ENCODE measurements at regions of chr15 and their contacts with region 1.

Region 1: GRCh38 chr15:28021281-28022039 is 77.7 kb downstream of the OCA2 start:
- DNase-seq: peak; percentile 38 to 75
- ATAC-seq: peak; percentile 42 to 82; a peak in 4 of 6 replicates
- H3K4me3 ChIP-seq: no peak overlapping the region
- H3K27ac ChIP-seq: no peak overlapping the region
- H3K4me1 ChIP-seq: peaks cover 5% of the 10 kb centered on the region; the same call in 1 of the 3 replicates
- CTCF ChIP-seq: peak; percentile 58
- EP300 ChIP-seq: no peak
- POLR2A ChIP-seq: no peak
- RAD21 ChIP-seq: peak; percentile 41; a peak in 3 of 5 replicates

Region 2: DNA sequence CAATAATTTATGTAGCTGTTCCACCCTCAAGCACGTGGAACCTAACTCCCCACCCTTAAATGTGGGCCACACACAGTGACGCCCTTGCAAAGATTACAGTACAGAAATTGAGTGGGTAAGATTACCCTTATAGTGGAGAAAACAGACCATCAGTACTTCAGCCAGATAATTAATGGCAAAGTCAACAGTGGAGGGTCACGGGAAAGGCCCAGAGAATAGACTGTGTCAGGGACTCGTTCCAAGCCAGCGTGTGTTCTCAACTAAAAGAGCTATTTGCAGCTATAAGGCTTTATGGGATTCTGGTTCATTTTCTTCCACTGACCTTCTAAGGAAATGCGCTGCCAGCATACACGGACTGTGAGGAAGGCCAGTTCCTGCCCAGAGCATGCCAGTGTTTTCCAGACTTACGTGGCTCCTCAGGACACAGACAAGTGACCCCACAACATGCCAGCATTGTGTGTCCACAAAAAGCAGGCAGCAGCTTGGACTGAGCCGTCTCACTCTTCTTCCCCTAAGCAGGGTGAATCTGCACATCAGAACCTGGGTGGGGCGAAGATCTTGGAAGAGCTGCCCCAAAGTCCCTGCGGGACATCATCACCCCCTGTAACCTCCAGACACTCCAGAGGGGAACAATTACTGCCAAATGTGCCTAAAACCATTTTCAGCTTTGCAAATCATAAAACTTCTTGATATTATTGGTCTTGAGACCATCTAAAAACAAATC is 350.8 kb before region 1 on chr15:
- CTCF ChIA-PET with region 1: no interaction called
- POLR2A ChIA-PET with region 1: no interaction called
- DNase-seq: no peak
- ATAC-seq: no peak
- H3K4me3 ChIP-seq: no peak overlapping the region
- H3K27ac ChIP-seq: no peak overlapping the region
- H3K4me1 ChIP-seq: no peaks in the 10 kb centered on the region
- CTCF ChIP-seq: no peak
- EP300 ChIP-seq: no peak
- POLR2A ChIP-seq: no peak
- RAD21 ChIP-seq: no peak

Region 3: GRCh38 chr15:27977696-27978095 is 43.8 kb before region 1 on chr15:
- CTCF ChIA-PET with region 1: no interaction called
- POLR2A ChIA-PET with region 1: no interaction called
- DNase-seq: no peak
- ATAC-seq: no peak
- H3K4me3 ChIP-seq: no peak overlapping the region
- H3K27ac ChIP-seq: no peak overlapping the region
- H3K4me1 ChIP-seq: no peaks in the 10 kb centered on the region
- CTCF ChIP-seq: no peak
- EP300 ChIP-seq: no peak
- POLR2A ChIP-seq: no peak
- RAD21 ChIP-seq: no peak

Region 4: DNA sequence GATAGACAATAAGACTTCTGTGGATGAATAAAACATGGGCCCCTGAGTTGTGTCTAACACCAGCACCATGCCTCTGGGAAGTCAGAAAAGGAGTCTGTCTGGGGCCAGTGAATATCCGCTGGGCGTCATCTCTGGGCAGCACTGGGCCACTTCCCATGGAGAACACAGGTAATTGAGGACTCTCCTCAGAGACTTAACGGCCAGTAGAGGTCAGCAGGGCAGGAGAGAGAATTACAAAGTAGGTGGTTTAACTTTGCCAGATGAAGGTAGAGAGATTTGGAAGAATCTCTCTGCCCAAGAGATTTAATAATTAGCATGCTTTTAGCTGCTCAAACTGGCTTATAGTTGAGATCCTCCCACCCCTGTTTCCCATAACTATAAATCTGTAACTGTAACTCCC is 12.0 kb after region 1 on chr15:
- CTCF ChIA-PET with region 1: interaction called, 41 read pairs
- POLR2A ChIA-PET with region 1: no interaction called
- DNase-seq: no peak
- ATAC-seq: 0 out of 6 replicates have a peak, but pooled peaks of 1 of the 2 experiments have one; percentile 40
- H3K4me3 ChIP-seq: no peak overlapping the region
- H3K27ac ChIP-seq: no peak overlapping the region
- H3K4me1 ChIP-seq: no peaks in the 10 kb centered on the region
- CTCF ChIP-seq: no peak
- EP300 ChIP-seq: no peak
- POLR2A ChIP-seq: no peak
- RAD21 ChIP-seq: no peak

Region 5: DNA sequence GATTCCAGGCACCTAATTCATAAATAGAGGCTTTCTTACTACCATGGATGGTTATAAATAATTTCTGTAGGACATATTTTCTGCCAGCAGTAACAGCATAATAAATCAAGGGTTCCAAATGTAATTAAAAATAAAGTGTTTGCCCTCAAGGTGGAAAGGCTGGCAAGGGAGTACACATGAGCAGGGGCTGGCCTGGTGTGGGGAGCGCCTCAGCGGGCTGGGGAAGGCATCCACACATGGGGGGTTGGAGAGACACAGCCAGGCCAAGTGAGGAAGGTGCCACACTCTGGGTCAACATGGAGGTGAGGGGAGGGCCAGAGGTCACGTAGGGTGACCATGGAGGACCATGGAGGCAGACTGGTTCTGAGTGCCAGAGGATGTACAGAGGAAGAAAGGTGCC is 143.4 kb after region 1 on chr15:
- CTCF ChIA-PET with region 1: no interaction called
- POLR2A ChIA-PET with region 1: no interaction called
- DNase-seq: no peak
- ATAC-seq: no peak
- H3K4me3 ChIP-seq: no peak overlapping the region
- H3K27ac ChIP-seq: no peak overlapping the region
- H3K4me1 ChIP-seq: no peaks in the 10 kb centered on the region
- CTCF ChIP-seq: no peak
- EP300 ChIP-seq: no peak
- POLR2A ChIP-seq: 0 out of 2 replicates have a peak, but pooled peaks have one; percentile 18
- RAD21 ChIP-seq: no peak

Region 6: DNA sequence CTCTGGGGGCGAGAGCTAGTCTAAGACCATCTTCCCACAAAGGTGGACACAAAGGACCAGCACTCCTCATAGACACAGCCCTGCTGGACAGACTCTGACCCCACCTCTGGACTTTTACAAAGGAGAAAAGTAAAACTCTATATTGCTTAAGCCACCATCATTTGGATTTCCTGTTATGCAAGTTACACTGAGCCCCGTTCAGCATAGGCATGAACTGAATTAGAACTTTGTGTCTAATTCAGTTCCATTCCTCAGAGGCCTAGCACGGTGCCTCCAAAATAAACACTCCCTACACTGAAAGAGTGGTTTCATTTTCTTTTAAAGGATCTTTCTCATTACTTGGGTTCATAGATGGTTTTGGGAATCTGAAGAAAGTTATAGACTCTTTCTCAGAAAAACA is 156.8 kb after region 1 on chr15:
- CTCF ChIA-PET with region 1: no interaction called
- POLR2A ChIA-PET with region 1: no interaction called
- DNase-seq: no peak
- ATAC-seq: no peak; a peak in 1 of 6 replicates
- H3K4me3 ChIP-seq: no peak overlapping the region
- H3K27ac ChIP-seq: no peak overlapping the region
- H3K4me1 ChIP-seq: no peaks in the 10 kb centered on the region
- CTCF ChIP-seq: no peak
- EP300 ChIP-seq: no peak
- POLR2A ChIP-seq: no peak
- RAD21 ChIP-seq: no peak